Activated CD8-positive, alpha-beta T cell treated with anti-CD3 and anti-CD28 coated beads, Interleukin-2, amount 10 ng/mL, durations not matched to agents 7 days and 5 days (primary cell): ENCODE measurements at regions of chr5 and their contacts with region 1.

Region 1: DNA sequence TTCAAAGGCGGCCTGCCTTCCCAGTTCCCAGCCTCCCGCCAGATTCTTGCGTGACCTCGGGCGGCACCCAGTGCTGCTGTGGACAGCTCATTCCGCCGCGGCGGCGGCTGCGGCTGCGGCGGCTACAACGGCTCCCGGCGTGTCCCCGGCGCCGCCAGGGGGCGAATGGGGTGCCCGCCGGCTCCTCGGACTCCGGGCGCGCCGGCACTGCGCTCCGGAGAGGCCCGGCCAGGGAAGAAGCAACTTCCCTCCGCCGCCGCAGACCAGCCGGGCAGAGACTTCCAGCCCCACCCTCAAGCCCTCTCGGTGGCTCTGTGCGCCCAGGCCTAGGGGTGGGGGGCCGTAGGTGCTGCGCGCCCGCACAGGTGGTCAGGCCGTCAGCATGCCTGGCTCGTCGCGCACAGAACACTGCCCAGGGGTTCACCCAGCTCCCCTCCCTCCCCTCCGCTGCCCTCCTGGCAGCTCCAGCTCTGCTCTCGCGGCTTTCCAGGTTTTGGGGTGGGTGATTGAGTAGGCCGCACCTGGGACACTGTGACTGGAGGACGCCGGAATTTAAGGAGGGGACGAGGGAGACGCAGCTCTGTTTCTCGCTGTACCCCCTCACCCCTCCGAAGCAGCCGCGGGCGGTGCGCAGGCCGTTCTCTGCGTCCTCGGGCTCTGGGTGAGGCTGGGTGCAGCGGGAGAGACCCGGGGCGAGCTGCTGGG is 20.2 kb downstream of the IGIP start:
- DNase-seq: peak; percentile 52
- ATAC-seq: peak; percentile 75
- H3K4me3 Mint-ChIP-seq: peak overlapping the region; percentile 15
- H3K27ac Mint-ChIP-seq: no peak overlapping the region
- H3K4me1 Mint-ChIP-seq: peaks cover 14% of the 10 kb centered on the region
- H3K27me3 Mint-ChIP-seq: peaks cover 28% of the 10 kb centered on the region

Region 2: GRCh38 chr5:140073296-140073695 is 72.7 kb before region 1 on chr5:
- CTCF ChIA-PET with region 1: interaction called, 40 read pairs
- POLR2A ChIA-PET with region 1: no interaction called
- DNase-seq: no peak
- ATAC-seq: no peak
- H3K4me3 Mint-ChIP-seq: no peak overlapping the region
- H3K27ac Mint-ChIP-seq: no peak overlapping the region
- H3K4me1 Mint-ChIP-seq: no peaks in the 10 kb centered on the region
- H3K27me3 Mint-ChIP-seq: peaks cover 30% of the 10 kb centered on the region

Region 3: DNA sequence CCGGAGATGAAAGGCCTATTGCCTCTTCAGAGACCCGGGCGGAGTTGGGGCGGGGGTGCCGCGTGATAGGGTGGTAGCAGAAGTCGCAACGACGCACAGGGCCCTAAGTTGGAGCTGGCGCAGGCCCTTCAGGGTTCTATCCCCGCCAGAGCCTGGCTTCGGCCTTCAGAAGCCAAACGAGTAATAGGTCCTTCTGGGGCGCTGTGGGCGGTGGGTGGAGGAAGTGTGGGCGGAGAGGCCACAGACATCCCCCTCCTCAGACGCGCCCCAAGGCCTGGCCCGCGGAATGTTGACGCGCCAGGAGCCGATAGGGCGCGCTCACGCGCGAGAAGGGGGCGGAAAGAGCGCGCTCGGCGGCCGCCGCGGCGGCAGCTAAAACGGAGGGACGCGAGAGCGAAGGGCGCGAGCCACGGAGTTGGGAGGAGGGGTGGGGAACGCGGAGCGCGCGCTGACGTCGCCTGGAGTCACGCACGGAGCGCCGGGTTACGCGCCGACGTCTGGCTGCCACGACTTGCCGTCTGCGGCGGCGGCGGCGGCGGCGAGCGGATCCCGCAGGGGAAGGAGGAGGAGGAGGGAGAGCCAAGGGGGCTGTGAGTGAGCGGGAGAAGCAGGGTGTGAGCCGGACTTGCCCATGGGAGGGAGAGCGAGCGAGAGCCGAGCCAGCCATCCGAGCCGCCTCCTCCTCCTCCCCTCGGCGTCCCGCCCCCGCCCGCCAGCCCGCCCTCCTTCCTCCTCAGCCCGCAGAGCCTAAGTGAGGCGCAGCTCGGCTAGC is 38.5 kb before region 1 on chr5:
- CTCF ChIA-PET with region 1: interaction called, 16 read pairs
- POLR2A ChIA-PET with region 1: interaction called, 3 read pairs
- DNase-seq: peak; percentile 95
- ATAC-seq: peak; percentile 87
- H3K4me3 Mint-ChIP-seq: peak overlapping the region; percentile 83
- H3K27ac Mint-ChIP-seq: peak overlapping the region; percentile 98
- H3K4me1 Mint-ChIP-seq: peaks cover 40% of the 10 kb centered on the region
- H3K27me3 Mint-ChIP-seq: peaks cover 46% of the 10 kb centered on the region

Region 4: DNA sequence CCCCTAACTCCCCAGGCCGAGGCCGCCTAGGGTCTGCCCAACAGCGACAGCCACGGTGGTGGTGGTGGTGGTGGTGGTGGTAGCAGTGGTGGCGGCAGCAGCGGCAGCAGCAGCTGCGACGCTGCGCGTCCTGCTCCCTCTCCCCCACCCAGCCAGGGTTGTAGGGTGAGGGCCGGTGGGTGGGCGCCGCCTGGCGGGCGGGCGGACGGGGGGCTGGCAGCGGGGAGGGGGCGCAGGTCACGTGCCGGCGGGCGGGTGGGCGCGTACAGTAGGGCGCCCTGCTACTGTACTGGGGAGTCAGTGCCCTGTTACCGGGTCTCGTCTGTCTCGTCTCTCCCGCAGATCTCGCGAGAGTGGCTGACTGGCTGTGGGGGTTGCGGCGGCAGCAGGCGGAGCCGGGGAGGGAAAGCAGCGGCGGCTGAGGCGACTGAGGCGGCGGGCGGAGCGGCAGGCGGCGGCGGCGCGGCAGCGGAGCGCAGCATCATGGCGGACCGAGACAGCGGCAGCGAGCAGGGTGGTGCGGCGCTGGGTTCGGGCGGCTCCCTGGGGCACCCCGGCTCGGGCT is 32.2 kb before region 1 on chr5 and contains the start of gene PURA:
- CTCF ChIA-PET with region 1: interaction called, 68 read pairs
- POLR2A ChIA-PET with region 1: no interaction called
- DNase-seq: peak; percentile 97
- ATAC-seq: peak; percentile 91
- H3K4me3 Mint-ChIP-seq: peak within 1 kb of the TSS; percentile 93
- H3K27ac Mint-ChIP-seq: peak within 1 kb of the TSS; percentile 94
- H3K4me1 Mint-ChIP-seq: peaks cover 70% of the 10 kb centered on the region
- H3K27me3 Mint-ChIP-seq: peaks cover 23% of the 10 kb centered on the region
- total RNA-seq, gene PURA: 12.5 to 13.4 TPM

Region 5: DNA sequence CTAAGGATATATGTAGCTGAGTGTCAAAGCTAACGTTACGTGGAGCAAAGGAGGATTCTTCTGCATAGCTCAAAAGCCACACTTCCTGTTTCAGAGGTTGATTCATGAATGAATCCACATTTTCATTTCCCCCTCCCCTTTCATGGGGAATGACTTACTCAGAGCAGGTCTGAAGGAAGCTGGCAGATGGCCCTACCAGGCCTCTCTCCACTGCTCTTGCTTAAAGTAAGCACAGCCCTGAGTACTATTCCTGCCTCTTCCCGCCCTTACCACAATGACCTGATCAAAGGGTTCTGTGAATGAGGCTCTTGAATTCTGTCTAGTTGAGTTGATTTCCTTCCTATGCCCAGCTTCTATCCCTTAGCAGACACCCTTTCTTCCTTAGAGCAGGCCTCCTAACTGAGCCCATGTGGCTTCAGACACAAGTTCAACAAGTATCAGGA is 14.0 kb before region 1 on chr5:
- CTCF ChIA-PET with region 1: interaction called, 52 read pairs
- POLR2A ChIA-PET with region 1: no interaction called
- DNase-seq: peak; percentile 22
- ATAC-seq: peak; percentile 82
- H3K4me3 Mint-ChIP-seq: no peak overlapping the region
- H3K27ac Mint-ChIP-seq: peak overlapping the region; percentile 5
- H3K4me1 Mint-ChIP-seq: peaks cover 39% of the 10 kb centered on the region
- H3K27me3 Mint-ChIP-seq: peaks cover 1% of the 10 kb centered on the region

Region 6: DNA sequence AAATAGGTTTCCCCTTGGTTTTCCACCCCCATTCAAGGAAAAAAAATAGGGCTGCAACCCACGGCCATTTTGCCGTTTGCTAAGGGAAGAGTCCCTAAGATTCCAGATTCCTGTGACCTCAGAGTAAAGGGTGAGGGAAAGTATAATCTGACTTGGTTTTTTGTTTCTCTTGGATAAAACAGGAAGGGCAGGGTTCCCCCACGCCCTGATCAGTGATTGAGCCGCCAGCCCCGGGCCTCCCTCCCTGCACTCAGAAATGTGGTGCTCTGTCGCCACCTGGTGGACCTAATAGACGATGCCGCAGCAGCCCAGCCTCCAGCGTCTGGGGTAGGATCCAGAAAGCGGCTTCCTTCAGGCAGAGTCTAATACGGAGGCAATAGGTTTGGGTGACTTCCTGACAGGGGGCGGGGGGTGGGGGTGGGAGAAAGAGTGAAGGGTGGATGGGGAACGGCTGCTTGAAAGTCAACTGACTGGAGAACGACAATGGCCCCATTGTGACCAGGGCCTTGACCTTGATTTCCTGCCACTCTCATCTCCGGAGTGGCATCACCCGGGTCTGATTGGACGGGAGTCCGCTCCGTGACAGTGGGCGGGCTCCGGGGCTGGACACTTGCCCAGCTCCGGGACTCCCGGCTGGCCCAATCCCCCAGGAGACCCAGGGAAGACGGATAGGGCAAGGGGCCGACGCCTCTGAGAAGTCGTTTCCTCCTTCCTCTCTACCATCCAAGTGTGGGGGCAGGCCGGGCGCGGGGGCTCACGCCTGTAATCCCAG is 11.2 kb after region 1 on chr5:
- CTCF ChIA-PET with region 1: interaction called, 25 read pairs
- POLR2A ChIA-PET with region 1: no interaction called
- DNase-seq: peak; percentile 90
- ATAC-seq: peak; percentile 98
- H3K4me3 Mint-ChIP-seq: peak overlapping the region; percentile 34
- H3K27ac Mint-ChIP-seq: peak overlapping the region; percentile 49
- H3K4me1 Mint-ChIP-seq: peaks cover 9% of the 10 kb centered on the region
- H3K27me3 Mint-ChIP-seq: peaks cover 6% of the 10 kb centered on the region